IMR-90 (cell line): ENCODE measurements at regions of chr1 and their contacts with region 1.

Region 1: GRCh38 chr1:6235296-6235677 is 477 bp downstream of the ICMT start:
- DNase-seq: no peak
- ATAC-seq: no peak; the same call in 1 of the 2 replicates
- H3K4me3 ChIP-seq: peak overlapping the region; percentile 98
- H3K27ac ChIP-seq: peak overlapping the region; percentile 50; the same call in 1 of the 2 replicates
- H3K4me1 ChIP-seq: peaks cover 4% of the 10 kb centered on the region; the same call in 1 of the 2 replicates
- H3K27me3 ChIP-seq: peaks cover 12% of the 10 kb centered on the region
- CTCF ChIP-seq: no peak
- POLR2A ChIP-seq: no peak
- RAD21 ChIP-seq: no peak

Region 2: DNA sequence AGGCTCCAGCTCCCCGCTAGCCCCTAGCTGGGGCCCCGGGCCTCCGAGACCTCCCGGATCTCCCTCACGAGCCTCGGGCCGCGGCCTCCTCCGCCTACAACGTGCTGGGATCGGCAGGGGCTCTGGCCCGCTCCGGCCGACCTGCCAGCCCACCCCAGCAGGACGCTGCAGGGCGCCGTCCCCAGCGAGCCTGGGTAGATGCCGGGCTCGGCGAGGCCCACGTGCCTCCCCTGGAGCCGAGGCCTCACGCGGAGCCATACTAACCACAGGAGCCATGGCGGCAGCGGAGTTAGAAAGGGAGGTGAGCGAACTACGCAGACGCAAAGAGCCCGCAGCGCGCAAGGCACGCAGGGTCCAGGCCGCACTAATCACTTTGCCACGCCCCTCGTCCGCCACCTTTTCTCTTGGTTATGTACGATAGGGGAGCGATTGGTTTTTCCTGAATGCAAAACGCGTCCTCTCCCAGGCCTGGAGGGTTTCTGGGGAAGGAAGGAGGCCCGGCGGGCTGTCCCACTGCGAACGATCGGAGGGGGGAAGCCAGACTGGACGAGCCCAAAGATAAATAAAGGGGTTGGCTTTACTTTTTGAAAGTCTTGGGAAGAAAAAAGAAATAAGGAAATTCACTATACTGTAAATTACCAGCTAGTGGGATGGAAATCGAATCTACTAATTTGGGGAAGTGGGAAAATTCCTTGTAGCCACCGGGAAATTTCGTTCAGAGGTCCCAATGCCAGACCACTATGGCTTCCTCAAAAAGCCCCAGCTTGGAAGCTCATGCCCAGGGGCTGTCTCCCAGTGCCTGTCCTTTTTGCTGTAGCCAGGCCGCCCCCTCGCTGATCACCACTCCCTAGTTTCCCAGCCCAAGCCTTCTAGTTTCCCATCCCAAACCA is 35.7 kb before region 1 on chr1 and contains the start of gene RPL22:
- CTCF ChIA-PET with region 1: no interaction called
- POLR2A ChIA-PET with region 1: no interaction called
- dilution Hi-C with region 1: no loop called
- in situ Hi-C with region 1: no loop called
- intact Hi-C with region 1: loop called (anchors 2 kb)
- DNase-seq: peak; percentile 99
- ATAC-seq: peak; percentile 98
- H3K4me3 ChIP-seq: peak within 1 kb of the TSS; percentile 70
- H3K27ac ChIP-seq: peak within 1 kb of the TSS; percentile 75
- H3K4me1 ChIP-seq: peaks cover 4% of the 10 kb centered on the region; the same call in 1 of the 2 replicates
- H3K27me3 ChIP-seq: no peaks in the 10 kb centered on the region
- CTCF ChIP-seq: no peak
- POLR2A ChIP-seq: peak; percentile 86
- RAD21 ChIP-seq: no peak
- total RNA-seq, gene RPL22: 26.2 and 71.9 TPM in 2 replicates

Region 3: DNA sequence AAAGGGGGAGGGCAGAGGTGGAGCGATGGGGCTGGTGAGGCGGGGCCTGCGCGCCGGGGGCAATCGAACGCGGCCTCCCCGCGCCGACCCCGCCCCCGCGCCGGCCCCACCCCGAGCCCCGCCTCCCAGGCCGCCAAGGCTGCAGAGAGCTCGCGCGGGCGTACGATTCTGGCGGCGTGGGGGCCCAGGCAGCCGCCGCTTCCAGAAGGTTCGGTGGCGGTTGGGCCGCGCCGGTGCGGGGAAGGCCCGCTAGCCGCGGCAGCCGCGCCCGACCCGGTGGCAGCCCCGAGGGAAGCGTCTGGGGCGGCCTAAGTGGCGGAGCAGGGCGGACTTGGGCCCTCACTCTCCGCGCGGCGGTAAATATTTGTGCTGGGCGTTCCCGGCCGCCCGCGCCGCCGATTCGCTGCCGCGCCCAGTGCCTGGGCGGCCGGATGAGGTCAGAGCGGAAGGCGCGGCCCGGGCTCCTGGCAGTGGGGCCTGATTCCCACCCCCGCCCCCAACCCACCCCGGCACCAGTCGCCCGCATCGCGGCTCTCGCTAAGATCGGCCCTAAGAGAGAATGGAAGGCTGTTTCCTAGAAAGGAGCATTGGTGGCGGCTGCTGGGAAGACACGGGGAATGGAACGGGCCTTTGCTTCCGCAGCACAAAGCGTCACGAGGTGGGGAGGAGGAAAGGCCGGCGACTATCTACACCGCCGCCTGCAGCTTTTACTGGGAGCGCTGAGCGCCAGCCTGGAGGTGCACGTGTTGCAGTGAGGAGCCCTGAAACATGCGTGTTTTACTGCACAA is 158.3 kb after region 1 on chr1 and contains the start of gene ACOT7:
- CTCF ChIA-PET with region 1: no interaction called
- POLR2A ChIA-PET with region 1: no interaction called
- dilution Hi-C with region 1: no loop called
- in situ Hi-C with region 1: no loop called
- intact Hi-C with region 1: loop called (anchors 1 kb)
- DNase-seq: peak; percentile 78
- ATAC-seq: peak; percentile 97
- H3K4me3 ChIP-seq: peak within 1 kb of the TSS; percentile 91
- H3K27ac ChIP-seq: peak within 1 kb of the TSS; percentile 89
- H3K4me1 ChIP-seq: peaks cover 9% of the 10 kb centered on the region
- H3K27me3 ChIP-seq: peaks cover 2% of the 10 kb centered on the region; the same call in 1 of the 2 replicates
- CTCF ChIP-seq: 0 out of 2 replicates have a peak, but pooled peaks have one; percentile 25
- POLR2A ChIP-seq: peak; percentile 88
- RAD21 ChIP-seq: no peak
- total RNA-seq, gene ACOT7: 48.9 and 51.6 TPM in 2 replicates